Right ventricle myocardium inferior (tissue), 1 donor: ENCODE measurements at regions of chr12 and their contacts with region 1.

Region 1: DNA sequence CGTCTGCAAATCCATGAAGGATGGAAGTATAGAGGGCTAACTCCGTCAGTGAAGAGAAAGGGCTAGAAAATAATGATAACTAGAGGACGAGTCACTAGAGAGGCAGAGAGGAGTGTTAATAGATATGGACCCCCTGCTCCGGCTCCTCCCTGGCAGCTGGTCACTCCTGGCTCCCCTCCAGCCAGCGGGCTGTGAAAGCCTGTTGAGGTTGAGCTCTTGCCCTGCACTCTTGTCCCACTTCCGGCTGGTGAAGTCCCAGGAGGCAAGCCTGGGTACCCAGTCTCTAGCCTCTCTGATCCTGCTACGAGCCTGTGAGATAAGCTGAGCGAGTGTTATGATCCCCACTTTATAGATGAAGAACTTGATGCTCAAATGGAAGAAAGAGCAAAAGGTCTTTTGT is 90.3 kb downstream of the RFX4 start:
- DNase-seq: no peak
- ATAC-seq: no peak

Region 2: DNA sequence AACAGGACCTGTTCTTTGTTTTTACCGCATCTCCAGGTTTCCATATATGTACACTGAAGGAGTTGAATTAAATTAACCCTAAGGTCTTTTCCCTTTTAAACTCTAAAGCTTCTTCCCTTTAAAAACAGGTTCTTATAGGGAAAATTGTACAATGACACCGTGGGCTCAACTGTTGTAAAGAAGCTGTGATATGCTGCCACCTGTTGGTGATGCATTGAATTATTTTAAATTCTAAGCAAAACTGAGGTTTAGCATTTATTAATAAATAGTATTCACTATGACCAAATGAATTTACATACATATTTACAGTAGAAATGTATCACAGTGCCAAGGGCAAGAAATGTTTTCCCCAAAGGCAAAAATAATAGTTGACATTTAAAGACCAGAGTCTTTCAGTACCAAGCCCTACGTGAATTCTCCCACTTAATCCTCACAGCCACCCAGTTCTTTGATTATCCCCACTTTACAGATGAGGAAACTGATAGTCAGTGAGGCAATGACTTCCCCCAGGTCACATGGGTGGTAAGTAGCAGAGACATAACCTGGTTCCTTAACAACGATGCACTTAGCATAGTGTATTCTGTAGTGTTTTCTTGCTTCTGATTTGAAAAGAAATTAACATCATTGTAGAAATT is 246.9 kb after region 1 on chr12:
- intact Hi-C with region 1: loop called (anchors 10 kb)
- DNase-seq: no peak
- ATAC-seq: no peak